Activated T-helper 2 cell treated with anti-CD3 and anti-CD28 coated beads, Interferon-gamma antibody, Interleukin-2, Interleukin-4, amounts not matched to agents 10 μg/mL and 5 μg/mL and 100 μg/mL, durations not matched to agents 14 hours and 24 hours and 36 hours (primary cell): ENCODE measurements at regions of chr12 and their contacts with region 1.

Region 1: GRCh38 chr12:112906712-112907414 is at the start of gene OAS1:
- DNase-seq: peak; percentile 38
- H3K4me3 Mint-ChIP-seq: peak within 1 kb of the TSS; percentile 96
- H3K27ac Mint-ChIP-seq: peak within 1 kb of the TSS; percentile 95
- H3K4me1 Mint-ChIP-seq: peaks cover 54% of the 10 kb centered on the region
- H3K27me3 Mint-ChIP-seq: no peaks in the 10 kb centered on the region
- total RNA-seq, gene OAS1: 17.7 and 17.8 TPM in 2 replicates

Region 2: DNA sequence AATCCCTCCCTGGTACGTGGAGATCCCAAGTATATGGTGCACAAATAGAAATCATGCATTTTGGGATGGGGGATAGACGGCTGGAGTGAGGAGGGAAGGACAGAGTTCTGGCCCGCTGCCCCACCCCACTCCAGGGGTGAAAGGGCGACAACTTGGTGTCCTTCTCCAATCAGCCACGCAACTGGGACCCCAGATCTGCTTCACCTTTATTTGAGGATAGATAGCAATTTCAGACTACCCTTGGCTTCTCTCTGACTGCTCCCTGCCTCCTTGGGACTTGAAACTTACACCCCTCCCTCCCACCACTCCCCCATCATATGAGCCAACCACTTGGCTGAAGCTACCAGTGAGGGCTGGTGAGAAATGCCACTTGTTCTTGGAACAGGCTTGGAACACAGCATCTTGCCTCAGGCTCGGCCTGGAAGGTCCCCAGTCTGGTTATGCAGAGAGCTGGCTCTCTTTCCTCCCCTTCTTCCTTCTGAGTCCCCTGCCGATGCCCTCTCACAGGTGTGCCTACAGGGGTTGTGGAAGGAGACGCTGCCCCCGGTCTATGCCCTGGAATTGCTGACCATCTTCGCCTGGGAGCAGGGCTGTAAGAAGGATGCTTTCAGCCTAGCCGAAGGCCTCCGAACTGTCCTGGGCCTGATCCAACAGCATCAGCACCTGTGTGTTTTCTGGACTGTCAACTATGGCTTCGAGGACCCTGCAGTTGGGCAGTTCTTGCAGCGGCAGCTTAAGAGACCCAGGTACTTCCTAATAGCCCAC is 39.6 kb after region 1 on chr12:
- intact Hi-C with region 1: no loop called
- DNase-seq: no peak
- H3K4me3 Mint-ChIP-seq: no peak overlapping the region
- H3K27ac Mint-ChIP-seq: no peak overlapping the region
- H3K4me1 Mint-ChIP-seq: peaks cover 7% of the 10 kb centered on the region
- H3K27me3 Mint-ChIP-seq: no peaks in the 10 kb centered on the region

Region 3: DNA sequence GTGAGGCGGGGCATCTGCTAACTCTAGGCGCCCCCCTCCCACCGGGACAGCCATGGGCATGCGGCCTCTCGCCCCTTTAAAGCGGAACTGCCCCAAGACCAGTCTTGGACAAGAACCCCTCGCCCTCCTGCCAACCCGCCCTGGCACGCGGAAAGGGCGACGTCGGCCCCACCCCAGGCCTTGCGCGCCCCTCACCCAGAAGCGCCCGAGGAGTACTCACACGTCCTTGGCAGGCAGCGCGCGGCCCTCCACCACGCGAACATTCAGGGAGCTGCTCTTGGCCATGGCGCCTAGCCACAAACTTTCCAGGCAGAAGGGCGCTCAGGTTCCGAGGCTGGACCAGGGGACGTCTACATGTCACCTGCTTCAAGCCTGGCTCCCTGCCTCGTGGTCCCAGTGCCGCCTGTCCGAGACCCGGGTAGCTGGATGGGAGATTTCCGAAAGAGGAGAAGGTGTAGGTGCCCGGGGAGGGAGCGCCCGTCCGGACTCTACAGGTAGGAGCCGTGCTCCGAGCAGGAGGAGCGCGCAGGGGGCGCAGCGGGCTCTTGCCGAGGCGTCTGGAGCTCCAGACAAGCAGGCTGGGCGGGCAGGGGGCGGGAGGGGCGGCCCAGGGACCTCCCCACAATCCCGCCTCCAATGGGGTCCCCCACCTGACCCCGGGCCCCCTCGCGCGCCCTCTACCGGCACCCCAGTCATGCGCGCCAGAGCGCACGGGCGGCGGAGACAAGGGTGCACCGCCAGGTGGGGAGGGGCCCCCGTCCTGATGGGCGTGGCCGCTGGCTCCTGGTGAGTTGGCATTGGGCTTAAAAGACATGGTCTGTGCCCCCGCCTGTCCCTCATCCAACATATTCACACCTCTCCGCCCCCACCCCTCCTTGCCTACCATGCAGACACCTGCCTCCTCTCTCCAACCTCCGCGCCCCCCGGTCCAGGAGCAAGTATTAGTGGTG is 228.6 kb after region 1 on chr12 and contains the start of gene RASAL1:
- intact Hi-C with region 1: loop called (anchors 10 kb)
- DNase-seq: peak; percentile 65
- H3K4me3 Mint-ChIP-seq: peak within 1 kb of the TSS; percentile 77
- H3K27ac Mint-ChIP-seq: peak within 1 kb of the TSS; percentile 85
- H3K4me1 Mint-ChIP-seq: peaks cover 15% of the 10 kb centered on the region
- H3K27me3 Mint-ChIP-seq: no peaks in the 10 kb centered on the region
- total RNA-seq, gene RASAL1: 2.2 TPM in 2 replicates

Region 4: GRCh38 chr12:113292091-113292490 is 385.2 kb after region 1 on chr12:
- intact Hi-C with region 1: no loop called
- DNase-seq: no peak
- H3K4me3 Mint-ChIP-seq: no peak overlapping the region
- H3K27ac Mint-ChIP-seq: no peak overlapping the region
- H3K4me1 Mint-ChIP-seq: no peaks in the 10 kb centered on the region
- H3K27me3 Mint-ChIP-seq: no peaks in the 10 kb centered on the region

Region 5: GRCh38 chr12:113334786-113335540 is 428.1 kb after region 1 on chr12 and contains the start of gene SLC8B1:
- intact Hi-C with region 1: no loop called
- DNase-seq: peak; percentile 77
- H3K4me3 Mint-ChIP-seq: peak within 1 kb of the TSS; percentile 88
- H3K27ac Mint-ChIP-seq: peak within 1 kb of the TSS; percentile 4
- H3K4me1 Mint-ChIP-seq: peaks cover 15% of the 10 kb centered on the region
- H3K27me3 Mint-ChIP-seq: peaks cover 2% of the 10 kb centered on the region
- total RNA-seq, gene SLC8B1: 20.8 and 23.5 TPM in 2 replicates